Posterior vena cava (tissue), 2 donors: ENCODE measurements at regions of chrX and their contacts with region 1.

Region 1: DNA sequence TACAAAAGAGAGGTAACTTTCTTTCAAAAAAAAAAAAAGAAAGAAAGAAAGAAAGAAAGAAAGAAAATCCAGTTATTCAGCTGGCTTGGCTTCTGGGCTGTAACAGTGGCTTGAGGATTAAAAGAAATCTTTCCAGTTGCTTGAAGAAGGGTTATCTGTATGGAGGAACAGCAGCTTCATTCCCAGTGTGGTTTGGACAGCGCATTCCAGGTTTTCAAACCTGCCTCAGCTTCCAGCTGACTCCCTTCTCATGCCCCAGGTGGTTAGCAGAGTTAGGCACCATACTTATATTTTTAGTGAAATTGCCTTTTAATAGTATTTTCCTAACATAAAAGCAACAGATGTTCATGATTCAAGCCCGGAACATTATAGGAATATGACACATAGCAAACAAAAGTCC is 48.6 kb downstream of the TMEM164 start:
- DNase-seq: no peak

Region 2: GRCh38 chrX:108186811-108187210 is 1864.7 kb before region 1 on chrX:
- intact Hi-C with region 1: loop called in 1 of 2 experiments (anchors 5 kb)
- DNase-seq: no peak

Region 3: DNA sequence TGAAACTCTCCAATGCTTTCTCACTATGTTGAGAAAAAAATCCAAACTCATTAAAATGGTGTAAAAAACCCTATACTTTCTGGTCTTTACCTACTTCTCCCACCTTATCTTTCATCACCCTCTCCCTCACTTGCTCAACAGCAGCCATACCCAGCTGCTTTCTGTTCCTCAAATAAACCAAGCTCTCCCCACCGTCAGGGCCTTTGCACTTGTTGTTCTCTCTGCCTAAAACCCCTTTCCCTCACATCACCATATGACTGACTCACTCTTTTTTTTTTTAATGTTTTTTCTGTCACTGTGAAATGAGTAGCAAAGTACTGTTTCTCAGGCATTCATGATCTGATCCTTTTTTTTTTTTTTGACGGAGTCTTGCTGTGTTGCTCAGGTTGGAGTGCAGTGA is 170.9 kb before region 1 on chrX:
- intact Hi-C with region 1: no loop called
- DNase-seq: no peak

Region 4: GRCh38 chrX:110108381-110108821 is 56.8 kb after region 1 on chrX:
- intact Hi-C with region 1: no loop called
- DNase-seq: no peak